GM12878 (cell line): ENCODE measurements at regions of chr4 and their contacts with region 1.

Region 1: DNA sequence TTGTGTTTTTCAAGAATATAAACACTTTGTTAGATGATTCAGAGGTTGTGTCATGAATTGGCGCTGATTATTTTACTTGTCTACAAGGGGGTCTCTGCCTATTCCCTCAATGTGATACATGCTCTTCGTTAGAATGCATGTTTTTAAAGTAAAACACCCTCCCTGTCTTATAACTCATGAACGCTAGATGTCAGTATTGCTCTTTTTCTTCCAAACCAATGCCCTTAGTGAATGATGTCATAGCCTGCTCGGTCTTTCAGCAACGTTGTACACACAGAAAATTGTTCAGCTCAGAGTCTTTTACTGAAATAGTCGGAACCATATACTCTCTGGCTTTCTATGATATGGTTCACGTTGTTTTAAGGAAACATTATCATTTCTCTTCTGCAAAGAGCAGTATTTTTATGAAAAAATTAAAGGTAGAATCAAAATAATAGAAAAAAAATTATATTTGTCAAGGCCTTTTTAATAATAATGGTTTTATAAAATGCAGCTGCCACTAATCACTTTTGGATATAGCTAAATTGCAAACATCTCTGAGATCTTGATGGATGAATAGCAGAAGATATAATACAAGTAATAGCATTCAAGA is 292.9 kb downstream of the TLL1 start:
- DNase-seq: peak; percentile 36
- ATAC-seq: peak; percentile 94
- H3K4me3 ChIP-seq: no peak overlapping the region
- H3K27ac ChIP-seq: no peak overlapping the region
- H3K4me1 ChIP-seq: no peaks in the 10 kb centered on the region
- H3K27me3 ChIP-seq: no peaks in the 10 kb centered on the region
- CTCF ChIP-seq: peak; percentile 64 to 84 (median 77); a peak in 5 of 6 replicates
- EP300 ChIP-seq: no peak
- POLR2A ChIP-seq: no peak
- RAD21 ChIP-seq: peak; percentile 95

Region 2: DNA sequence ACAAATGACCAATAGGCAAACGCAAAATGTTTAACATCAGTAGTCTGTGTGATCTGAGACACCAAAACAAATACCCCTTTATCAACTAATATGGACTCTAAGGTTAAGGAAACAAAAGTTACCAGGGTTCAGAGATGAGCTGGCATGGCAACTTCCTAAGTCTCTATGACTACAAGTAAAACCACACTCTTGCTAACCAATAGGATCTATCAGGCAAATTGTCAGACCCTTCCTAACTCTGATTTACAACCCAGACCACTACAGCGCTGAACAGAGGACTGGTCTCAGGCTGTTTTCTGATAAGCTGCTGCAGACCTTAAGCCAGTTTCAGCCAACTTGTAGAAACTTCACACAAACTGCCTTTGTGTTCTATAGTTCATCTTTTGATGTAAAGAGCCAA is 315.1 kb after region 1 on chr4:
- CTCF ChIA-PET with region 1: no interaction called
- POLR2A ChIA-PET with region 1: no interaction called
- RAD21 ChIA-PET with region 1: no interaction called
- SMC1A ChIA-PET with region 1: no interaction called
- in situ Hi-C with region 1: no loop called
- intact Hi-C with region 1: loop called (anchors 10 kb)
- DNase-seq: no peak
- ATAC-seq: peak; percentile 70
- H3K4me3 ChIP-seq: no peak overlapping the region
- H3K27ac ChIP-seq: no peak overlapping the region
- H3K4me1 ChIP-seq: no peaks in the 10 kb centered on the region
- H3K27me3 ChIP-seq: no peaks in the 10 kb centered on the region
- CTCF ChIP-seq: no peak
- EP300 ChIP-seq: no peak
- POLR2A ChIP-seq: no peak
- RAD21 ChIP-seq: no peak

Region 3: GRCh38 chr4:166662266-166662843 is 496.4 kb after region 1 on chr4:
- CTCF ChIA-PET with region 1: no interaction called
- POLR2A ChIA-PET with region 1: no interaction called
- RAD21 ChIA-PET with region 1: interaction called, 3 read pairs
- SMC1A ChIA-PET with region 1: no interaction called
- in situ Hi-C with region 1: no loop called
- intact Hi-C with region 1: loop called (anchors 2 kb)
- DNase-seq: peak; percentile 92
- ATAC-seq: peak; percentile 95
- H3K4me3 ChIP-seq: no peak overlapping the region
- H3K27ac ChIP-seq: peak overlapping the region; percentile 93
- H3K4me1 ChIP-seq: peaks cover 8% of the 10 kb centered on the region
- H3K27me3 ChIP-seq: no peaks in the 10 kb centered on the region
- CTCF ChIP-seq: no peak
- EP300 ChIP-seq: peak; percentile 100
- POLR2A ChIP-seq: no peak
- RAD21 ChIP-seq: no peak

Region 4: GRCh38 chr4:167021545-167022155 is 855.7 kb after region 1 on chr4:
- CTCF ChIA-PET with region 1: interaction called, 3 read pairs
- POLR2A ChIA-PET with region 1: no interaction called
- RAD21 ChIA-PET with region 1: no interaction called
- SMC1A ChIA-PET with region 1: interaction called, 4 read pairs
- in situ Hi-C with region 1: loop called (anchors 25 kb)
- intact Hi-C with region 1: loop called (anchors 1 kb)
- DNase-seq: peak; percentile 30
- ATAC-seq: peak; percentile 75
- H3K4me3 ChIP-seq: no peak overlapping the region
- H3K27ac ChIP-seq: no peak overlapping the region
- H3K4me1 ChIP-seq: no peaks in the 10 kb centered on the region
- H3K27me3 ChIP-seq: no peaks in the 10 kb centered on the region
- CTCF ChIP-seq: peak; percentile 70 to 75 (median 74)
- EP300 ChIP-seq: no peak
- POLR2A ChIP-seq: no peak
- RAD21 ChIP-seq: peak; percentile 76

Region 5: DNA sequence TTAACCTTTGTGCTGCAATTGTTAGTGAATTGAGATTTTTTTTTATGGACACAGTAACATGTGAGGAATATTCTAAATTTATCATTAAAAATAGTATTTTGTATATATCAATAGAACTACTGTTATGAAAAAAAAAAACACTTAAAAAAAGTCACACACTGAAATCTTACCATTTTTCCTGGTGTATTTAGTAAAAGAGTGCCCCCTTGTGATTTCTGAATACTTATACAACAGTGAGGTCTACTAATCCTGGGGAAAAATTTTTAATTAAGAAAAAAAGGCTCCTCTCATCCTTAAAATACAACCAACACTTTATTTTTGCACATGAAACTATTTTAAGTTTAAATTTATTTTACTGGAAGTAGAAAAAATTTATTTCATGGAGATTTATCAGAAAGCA is 1124.8 kb after region 1 on chr4:
- CTCF ChIA-PET with region 1: interaction called, 6 read pairs
- POLR2A ChIA-PET with region 1: no interaction called
- RAD21 ChIA-PET with region 1: interaction called, 5 read pairs
- SMC1A ChIA-PET with region 1: interaction called, 8 read pairs
- in situ Hi-C with region 1: loop called (anchors 25 kb)
- intact Hi-C with region 1: loop called (anchors 1 kb)
- DNase-seq: no peak
- ATAC-seq: peak; percentile 44; the same call in 2 of the 3 replicates
- H3K4me3 ChIP-seq: no peak overlapping the region
- H3K27ac ChIP-seq: no peak overlapping the region
- H3K4me1 ChIP-seq: no peaks in the 10 kb centered on the region
- H3K27me3 ChIP-seq: no peaks in the 10 kb centered on the region
- CTCF ChIP-seq: peak in 2 of 3 experiments; percentile 9 to 43; a peak in 1 of 6 replicates
- EP300 ChIP-seq: no peak
- POLR2A ChIP-seq: no peak
- RAD21 ChIP-seq: peak; percentile 66

Region 6: DNA sequence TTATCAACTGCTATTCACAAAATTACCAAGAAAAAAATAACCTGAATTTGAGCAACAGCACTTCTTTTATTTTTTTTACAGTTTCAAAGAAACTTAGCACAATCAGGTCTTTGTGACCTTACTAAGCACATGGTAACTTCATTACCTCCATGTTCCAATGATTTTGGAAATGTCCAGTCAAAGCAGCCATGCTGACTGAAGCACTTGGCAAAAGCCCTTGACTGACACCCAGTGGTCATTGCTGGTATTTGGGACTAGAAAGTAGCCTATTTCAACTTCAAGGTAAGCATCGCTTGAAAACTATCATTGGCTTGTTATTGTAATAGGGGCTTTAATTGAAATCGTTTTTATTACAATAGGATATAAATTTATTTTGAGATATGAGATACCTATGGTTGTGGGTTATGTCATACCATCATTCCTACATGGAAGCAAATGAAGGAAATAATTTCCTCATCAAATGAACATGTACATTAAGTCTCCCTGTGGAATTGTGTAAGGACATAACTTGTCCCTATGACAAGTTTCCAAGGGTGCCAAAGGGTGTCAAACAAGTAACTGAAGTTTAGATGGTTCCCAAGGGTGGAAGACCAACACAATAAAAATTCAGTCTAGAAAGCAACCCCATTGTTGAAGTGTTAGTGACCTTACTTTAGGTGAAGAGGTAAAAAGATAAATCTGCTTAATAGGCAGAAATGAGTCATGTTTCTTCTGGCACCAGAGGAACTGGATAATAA is 1911.2 kb after region 1 on chr4:
- CTCF ChIA-PET with region 1: no interaction called
- POLR2A ChIA-PET with region 1: no interaction called
- RAD21 ChIA-PET with region 1: no interaction called
- SMC1A ChIA-PET with region 1: interaction called, 3 read pairs
- in situ Hi-C with region 1: no loop called
- intact Hi-C with region 1: loop called (anchors 2 kb)
- DNase-seq: peak; percentile 16
- ATAC-seq: peak; percentile 85
- H3K4me3 ChIP-seq: no peak overlapping the region
- H3K27ac ChIP-seq: no peak overlapping the region
- H3K4me1 ChIP-seq: no peaks in the 10 kb centered on the region
- H3K27me3 ChIP-seq: no peaks in the 10 kb centered on the region
- CTCF ChIP-seq: peak; percentile 80 to 91 (median 86)
- EP300 ChIP-seq: no peak
- POLR2A ChIP-seq: no peak
- RAD21 ChIP-seq: peak; percentile 92